Endothelial cell of umbilical vein (primary cell): ENCODE measurements at regions of chr1 and their contacts with region 1.

Region 1: DNA sequence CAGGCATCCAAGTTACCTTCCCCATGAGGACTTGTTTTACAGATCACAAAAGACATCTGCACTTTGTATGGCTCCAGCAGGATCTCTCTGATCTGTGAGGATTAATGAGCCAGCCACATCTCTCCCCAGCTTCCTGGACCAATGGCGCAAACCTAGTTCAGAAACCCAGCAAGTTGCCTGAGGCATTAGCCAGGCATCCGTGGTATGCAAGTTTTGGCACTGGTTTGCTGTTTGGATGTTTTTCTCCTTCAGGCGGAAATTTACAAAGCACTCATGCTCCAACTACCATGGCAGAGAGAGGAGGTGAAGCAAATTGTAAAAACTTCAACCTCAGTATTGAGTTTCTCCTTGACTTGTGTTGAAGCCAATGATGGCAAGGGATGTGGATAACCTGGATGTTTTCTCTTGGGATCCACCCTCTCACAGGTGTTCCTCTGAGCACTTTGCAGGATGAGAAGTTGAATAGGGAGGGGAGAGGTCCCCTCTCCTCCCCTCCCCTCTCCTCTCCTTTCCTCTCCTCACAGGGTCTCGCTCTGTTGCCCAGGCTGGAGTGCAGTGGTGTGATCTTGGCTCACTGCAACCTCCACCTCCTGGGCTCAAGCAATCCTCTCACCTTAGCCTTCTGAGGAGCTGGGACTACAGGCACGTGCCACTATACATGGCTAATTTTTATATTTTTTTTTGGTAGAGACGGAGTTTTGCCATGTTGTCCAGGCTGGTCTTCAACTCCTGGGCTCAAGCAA is 25.6 kb upstream of the ENO1 start:
- DNase-seq: peak; percentile 80
- H3K4me3 ChIP-seq: no peak overlapping the region
- H3K27ac ChIP-seq: peak overlapping the region; percentile 4
- H3K4me1 ChIP-seq: peaks cover 18% of the 10 kb centered on the region
- H3K27me3 ChIP-seq: no peaks in the 10 kb centered on the region
- CTCF ChIP-seq: no peak
- POLR2A ChIP-seq: no peak

Region 2: DNA sequence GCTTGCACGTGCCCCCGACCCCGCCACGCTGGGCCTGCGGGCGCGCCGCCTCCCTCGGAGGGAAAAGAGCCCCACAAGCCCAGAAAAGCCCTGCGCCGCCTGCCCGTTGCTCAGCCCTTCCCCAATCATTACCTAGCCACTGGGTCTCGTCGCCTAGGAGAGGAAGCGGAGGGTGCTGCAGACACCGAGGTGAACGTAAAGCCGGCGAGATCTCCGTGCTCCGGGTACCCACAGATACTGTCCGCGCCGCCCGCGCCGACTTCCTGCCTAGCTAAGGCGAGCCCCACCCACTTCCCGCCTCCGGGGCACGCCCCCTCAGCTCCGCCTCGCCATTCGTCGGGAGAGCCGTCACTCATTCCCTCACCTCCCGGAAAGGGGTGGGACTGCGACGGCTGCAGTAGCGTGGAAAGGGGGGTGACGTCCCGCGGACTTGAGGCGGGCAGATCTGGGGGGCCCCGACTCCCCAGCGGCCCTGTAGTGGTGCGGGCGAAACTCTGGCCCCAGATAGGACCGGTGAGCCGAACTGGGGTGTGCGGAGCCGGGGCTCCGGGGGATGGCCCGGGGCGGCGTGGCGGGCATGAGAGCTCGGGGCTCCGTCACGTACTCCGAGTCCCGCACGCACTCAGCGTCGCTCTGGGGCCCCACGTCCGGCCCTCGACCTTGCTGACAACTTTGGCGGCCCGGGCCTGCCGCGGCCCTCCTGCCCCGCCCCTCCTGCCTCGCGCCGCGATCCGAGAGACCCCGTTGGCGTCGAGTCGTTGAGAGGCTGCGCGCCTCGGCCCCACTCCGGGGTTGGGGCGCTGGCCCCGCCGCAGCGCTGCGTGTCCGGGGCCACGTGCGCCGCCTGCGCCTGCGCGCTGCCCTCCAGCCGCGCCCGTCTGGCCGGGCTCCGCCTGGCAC is 25.4 kb before region 1 on chr1 and contains the start of gene ENO1:
- CTCF ChIA-PET with region 1: no interaction called
- POLR2A ChIA-PET with region 1: interaction called, 3 read pairs
- dilution Hi-C with region 1: no loop called
- intact Hi-C with region 1: loop called (anchors 1 kb)
- DNase-seq: peak; percentile 99
- H3K4me3 ChIP-seq: peak within 1 kb of the TSS; percentile 48 to 83 (median 62)
- H3K27ac ChIP-seq: peak within 1 kb of the TSS; percentile 77
- H3K4me1 ChIP-seq: peaks cover 41% of the 10 kb centered on the region
- H3K27me3 ChIP-seq: no peaks in the 10 kb centered on the region
- CTCF ChIP-seq: no peak
- POLR2A ChIP-seq: peak; percentile 94
- total RNA-seq, gene ENO1: 1,530 and 1,593 TPM in 2 replicates